IMR-90 (cell line): ENCODE measurements at regions of chr19 and their contacts with region 1.

Region 1: GRCh38 chr19:13861732-13862531 is 15.0 kb upstream of the NANOS3 start:
- DNase-seq: peak; percentile 87
- ATAC-seq: peak; percentile 86
- H3K4me3 ChIP-seq: peak overlapping the region; percentile 45
- H3K27ac ChIP-seq: peak overlapping the region; percentile 95
- H3K4me1 ChIP-seq: peaks cover 13% of the 10 kb centered on the region
- H3K27me3 ChIP-seq: no peaks in the 10 kb centered on the region
- CTCF ChIP-seq: peak; percentile 97
- POLR2A ChIP-seq: peak; percentile 71; the same call in 1 of the 2 replicates
- RAD21 ChIP-seq: peak; percentile 95

Region 2: DNA sequence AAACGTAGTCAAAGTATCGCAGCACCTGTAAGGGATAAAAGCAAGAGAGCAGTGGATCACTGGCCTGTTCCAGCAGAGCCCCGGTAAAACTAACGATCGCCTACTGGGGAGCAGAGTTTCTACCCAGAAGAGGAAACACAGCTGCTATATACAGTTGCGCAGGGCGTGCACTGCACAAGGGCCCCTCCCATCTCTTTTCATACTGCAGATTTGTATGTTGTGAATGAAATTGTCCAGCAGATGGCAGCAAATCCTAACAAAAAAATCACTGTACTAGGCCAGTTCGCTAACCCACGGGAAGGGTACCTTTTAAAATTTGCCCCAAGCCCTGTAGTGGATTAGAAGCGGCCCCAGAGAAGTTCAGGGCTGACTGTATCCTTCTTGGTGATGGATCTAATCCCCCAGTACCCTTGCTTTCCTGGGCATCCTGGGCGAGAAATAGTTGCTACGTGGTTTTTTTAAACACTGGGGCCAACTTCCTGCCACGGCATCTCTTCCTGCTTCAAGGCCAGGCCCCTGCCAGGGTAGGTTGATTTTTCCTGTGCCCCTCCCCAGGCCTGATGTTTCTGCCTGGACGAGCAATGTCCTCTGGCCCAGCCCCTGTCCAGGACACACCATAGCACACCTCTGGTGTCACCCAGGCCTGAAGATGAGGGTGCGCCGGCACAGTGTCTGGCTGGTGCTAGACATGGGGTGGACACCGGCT is 584.7 kb before region 1 on chr19:
- CTCF ChIA-PET with region 1: no interaction called
- POLR2A ChIA-PET with region 1: no interaction called
- dilution Hi-C with region 1: no loop called
- in situ Hi-C with region 1: loop called (anchors 25 kb)
- intact Hi-C with region 1: no loop called
- DNase-seq: peak; percentile 74
- ATAC-seq: peak; percentile 95
- H3K4me3 ChIP-seq: no peak overlapping the region
- H3K27ac ChIP-seq: no peak overlapping the region
- H3K4me1 ChIP-seq: no peaks in the 10 kb centered on the region
- H3K27me3 ChIP-seq: no peaks in the 10 kb centered on the region; the same call in 1 of the 2 replicates
- CTCF ChIP-seq: peak; percentile 73
- POLR2A ChIP-seq: no peak
- RAD21 ChIP-seq: peak; percentile 76

Region 3: DNA sequence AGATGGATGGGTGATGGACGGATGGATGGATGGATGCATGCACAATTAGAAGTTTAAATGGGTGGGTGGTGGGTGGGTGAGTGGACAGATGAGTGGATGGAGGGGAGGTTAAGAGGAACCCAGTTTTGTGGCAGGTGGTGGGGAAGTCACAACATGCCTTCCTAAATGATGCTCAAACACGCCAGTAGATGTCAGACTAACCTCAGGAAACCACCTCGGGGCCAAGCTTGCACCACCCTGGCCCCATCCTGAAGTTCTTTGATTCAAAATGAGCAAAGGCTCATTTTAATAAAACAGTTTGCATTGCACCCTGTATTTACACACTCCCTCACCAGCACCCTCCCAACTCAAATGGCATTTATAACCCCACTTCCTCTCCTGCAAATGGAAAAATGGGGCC is 264.3 kb before region 1 on chr19:
- CTCF ChIA-PET with region 1: no interaction called
- POLR2A ChIA-PET with region 1: no interaction called
- dilution Hi-C with region 1: no loop called
- in situ Hi-C with region 1: loop called (anchors 10 kb)
- intact Hi-C with region 1: loop called (anchors 1 kb)
- DNase-seq: peak; percentile 74
- ATAC-seq: peak; percentile 97
- H3K4me3 ChIP-seq: no peak overlapping the region
- H3K27ac ChIP-seq: no peak overlapping the region
- H3K4me1 ChIP-seq: no peaks in the 10 kb centered on the region
- H3K27me3 ChIP-seq: no peaks in the 10 kb centered on the region; the same call in 1 of the 2 replicates
- CTCF ChIP-seq: peak; percentile 83
- POLR2A ChIP-seq: 0 out of 2 replicates have a peak, but pooled peaks have one; percentile 40
- RAD21 ChIP-seq: peak; percentile 93

Region 4: DNA sequence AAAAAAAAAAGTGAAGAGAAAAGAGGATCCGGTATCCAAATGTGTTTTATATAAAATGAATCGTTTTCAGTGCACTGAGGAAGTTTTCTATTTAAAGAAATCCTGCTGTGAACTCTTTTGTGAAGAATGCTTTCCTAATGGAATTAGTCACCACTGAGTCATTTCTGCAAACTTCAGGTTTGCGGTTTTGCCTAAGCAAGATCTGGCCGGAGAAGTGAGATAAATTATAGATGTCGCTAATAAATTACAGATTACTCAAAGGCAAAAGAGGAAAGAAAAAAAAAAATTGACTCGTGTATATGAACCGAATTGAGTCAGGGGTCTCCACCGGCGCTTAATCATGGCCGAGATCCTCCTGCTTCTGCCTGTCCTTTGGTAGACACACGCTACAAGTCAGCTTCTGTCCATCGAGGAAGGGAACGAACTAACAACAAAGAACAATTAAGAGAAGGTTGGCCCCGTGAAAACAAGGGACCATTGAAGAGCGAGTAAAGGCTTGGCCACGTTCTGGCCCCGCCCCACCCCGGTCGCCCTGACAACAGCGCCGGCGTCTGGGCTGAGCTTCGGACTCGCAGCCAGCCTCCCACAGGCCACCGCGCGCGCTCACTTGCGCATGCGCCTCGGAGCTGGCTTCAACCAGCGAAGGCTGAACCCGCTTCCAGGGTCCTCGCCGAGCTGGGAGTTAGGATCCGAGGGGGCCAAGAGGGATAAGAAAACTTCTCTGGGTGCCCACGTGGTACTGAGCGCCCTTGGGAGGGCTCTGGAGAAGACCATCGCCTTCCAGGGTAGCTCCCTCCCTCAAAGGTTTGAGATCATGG is 130.6 kb before region 1 on chr19:
- CTCF ChIA-PET with region 1: no interaction called
- POLR2A ChIA-PET with region 1: no interaction called
- dilution Hi-C with region 1: no loop called
- in situ Hi-C with region 1: no loop called
- intact Hi-C with region 1: loop called (anchors 5 kb)
- DNase-seq: peak; percentile 98
- ATAC-seq: peak; percentile 98
- H3K4me3 ChIP-seq: peak overlapping the region; percentile 52
- H3K27ac ChIP-seq: peak overlapping the region; percentile 87
- H3K4me1 ChIP-seq: peaks cover 10% of the 10 kb centered on the region
- H3K27me3 ChIP-seq: no peaks in the 10 kb centered on the region
- CTCF ChIP-seq: no peak
- POLR2A ChIP-seq: peak; percentile 62; the same call in 1 of the 2 replicates
- RAD21 ChIP-seq: no peak

Region 5: DNA sequence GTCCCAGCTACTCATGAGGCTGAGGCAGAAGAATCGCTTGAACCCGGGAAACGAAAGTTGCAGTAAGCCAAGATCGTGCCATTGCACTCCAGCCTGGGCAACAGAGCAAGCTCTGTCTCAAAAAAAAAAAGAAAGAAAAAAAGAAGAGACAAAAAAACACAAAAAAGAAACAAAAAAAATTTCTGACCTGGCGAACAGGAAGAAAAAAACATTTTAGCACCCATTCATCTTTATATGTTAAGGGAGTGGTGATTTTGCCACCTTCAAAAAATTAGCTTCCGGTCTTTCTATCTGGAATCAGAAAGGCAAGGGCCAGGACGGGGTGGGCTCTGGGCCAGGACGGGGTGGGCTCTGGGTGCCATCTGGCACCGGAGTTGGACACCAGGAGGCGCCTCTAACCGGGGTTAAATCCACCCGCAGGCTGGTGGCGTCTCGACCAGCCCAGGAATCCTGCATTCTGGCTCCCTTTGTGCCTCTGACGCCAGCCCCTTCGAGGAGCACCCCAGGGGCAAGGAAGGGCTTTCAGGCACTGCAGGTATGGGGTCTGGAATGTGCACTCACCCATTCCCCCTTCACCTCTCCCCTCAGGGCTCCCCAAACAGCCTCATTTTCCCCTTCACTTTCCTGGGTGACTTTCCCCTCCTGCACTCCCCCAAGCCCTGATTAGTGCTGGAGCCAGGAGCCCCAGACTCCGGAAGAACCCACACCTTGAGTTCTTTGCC is 77.0 kb before region 1 on chr19:
- CTCF ChIA-PET with region 1: interaction called, 10 read pairs
- POLR2A ChIA-PET with region 1: no interaction called
- dilution Hi-C with region 1: no loop called
- in situ Hi-C with region 1: loop called (anchors 5 kb)
- intact Hi-C with region 1: loop called (anchors 1 kb)
- DNase-seq: peak; percentile 58
- ATAC-seq: peak; percentile 48
- H3K4me3 ChIP-seq: no peak overlapping the region
- H3K27ac ChIP-seq: peak overlapping the region; percentile 33
- H3K4me1 ChIP-seq: peaks cover 10% of the 10 kb centered on the region
- H3K27me3 ChIP-seq: no peaks in the 10 kb centered on the region
- CTCF ChIP-seq: peak; percentile 70
- POLR2A ChIP-seq: no peak
- RAD21 ChIP-seq: peak; percentile 77

Region 6: GRCh38 chr19:13839130-13839937 is 22.6 kb before region 1 on chr19:
- CTCF ChIA-PET with region 1: interaction called, 13 read pairs
- POLR2A ChIA-PET with region 1: interaction called, 5 read pairs
- dilution Hi-C with region 1: no loop called
- in situ Hi-C with region 1: no loop called
- intact Hi-C with region 1: loop called (anchors 1 kb)
- DNase-seq: peak; percentile 84
- ATAC-seq: peak; percentile 42
- H3K4me3 ChIP-seq: peak overlapping the region; percentile 95
- H3K27ac ChIP-seq: peak overlapping the region; percentile 97
- H3K4me1 ChIP-seq: peaks cover 36% of the 10 kb centered on the region
- H3K27me3 ChIP-seq: no peaks in the 10 kb centered on the region
- CTCF ChIP-seq: 0 out of 2 replicates have a peak, but pooled peaks have one; percentile 8
- POLR2A ChIP-seq: peak; percentile 90
- RAD21 ChIP-seq: no peak

Region 7: DNA sequence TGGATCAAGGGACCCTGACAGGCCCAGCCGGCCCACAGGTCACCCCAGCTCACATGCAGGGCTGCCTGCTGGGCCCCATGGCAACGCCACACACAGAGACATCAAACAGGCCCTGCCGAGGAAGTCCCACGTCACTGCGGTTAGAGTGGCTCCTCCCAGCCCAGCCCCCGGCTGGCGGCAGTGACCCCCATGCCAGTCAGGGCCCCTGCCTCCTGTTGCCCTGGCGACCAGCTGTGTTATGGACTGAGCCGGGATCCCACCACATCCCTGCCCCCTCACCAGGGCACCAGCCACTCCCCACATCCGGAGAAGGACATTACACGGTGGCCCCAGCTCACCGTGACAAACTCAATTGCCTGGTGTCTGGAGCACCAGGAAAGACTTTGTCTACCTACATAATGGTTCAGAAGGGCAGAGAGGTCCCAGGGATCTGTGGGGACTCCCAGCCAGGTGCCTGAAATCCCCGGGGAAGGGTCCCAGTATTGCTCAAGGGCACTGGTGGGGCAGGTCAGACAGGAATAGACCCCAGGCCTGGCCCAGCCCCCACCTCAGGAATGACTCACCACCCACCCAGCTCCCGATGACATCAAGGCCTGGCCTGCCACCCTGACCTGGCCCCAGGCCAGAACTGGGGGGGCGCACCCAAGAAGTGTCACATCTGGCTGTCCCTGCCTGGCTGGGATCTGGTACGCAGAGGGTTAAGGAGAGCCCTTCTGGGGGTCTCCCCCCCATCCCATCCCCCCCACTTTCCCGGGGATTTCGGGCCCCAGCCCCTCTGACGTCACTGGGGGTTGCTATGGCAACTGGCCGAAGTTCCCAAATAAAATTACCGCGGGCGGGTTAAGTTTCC is 15.2 kb before region 1 on chr19:
- CTCF ChIA-PET with region 1: interaction called, 9 read pairs
- POLR2A ChIA-PET with region 1: interaction called, 12 read pairs
- dilution Hi-C with region 1: no loop called
- in situ Hi-C with region 1: no loop called
- intact Hi-C with region 1: no loop called
- DNase-seq: peak; percentile 93
- ATAC-seq: peak; percentile 13
- H3K4me3 ChIP-seq: peak overlapping the region; percentile 6; the same call in 1 of the 2 replicates
- H3K27ac ChIP-seq: peak overlapping the region; percentile 99
- H3K4me1 ChIP-seq: peaks cover 39% of the 10 kb centered on the region
- H3K27me3 ChIP-seq: no peaks in the 10 kb centered on the region
- CTCF ChIP-seq: no peak
- POLR2A ChIP-seq: no peak
- RAD21 ChIP-seq: 0 out of 2 replicates have a peak, but pooled peaks have one; percentile 12